Activated CD4-positive, alpha-beta T cell treated with anti-CD3 and anti-CD28 coated beads for 36 hours (primary cell): ENCODE measurements at regions of chr11 and their contacts with region 1.

Region 1: GRCh38 chr11:14606741-14607140 is 36.9 kb upstream of the PDE3B start:
- DNase-seq: no peak
- ATAC-seq: no peak
- H3K4me3 Mint-ChIP-seq: no peak overlapping the region
- H3K27ac Mint-ChIP-seq: no peak overlapping the region
- H3K4me1 Mint-ChIP-seq: peaks cover 6% of the 10 kb centered on the region
- H3K27me3 Mint-ChIP-seq: no peaks in the 10 kb centered on the region

Region 2: DNA sequence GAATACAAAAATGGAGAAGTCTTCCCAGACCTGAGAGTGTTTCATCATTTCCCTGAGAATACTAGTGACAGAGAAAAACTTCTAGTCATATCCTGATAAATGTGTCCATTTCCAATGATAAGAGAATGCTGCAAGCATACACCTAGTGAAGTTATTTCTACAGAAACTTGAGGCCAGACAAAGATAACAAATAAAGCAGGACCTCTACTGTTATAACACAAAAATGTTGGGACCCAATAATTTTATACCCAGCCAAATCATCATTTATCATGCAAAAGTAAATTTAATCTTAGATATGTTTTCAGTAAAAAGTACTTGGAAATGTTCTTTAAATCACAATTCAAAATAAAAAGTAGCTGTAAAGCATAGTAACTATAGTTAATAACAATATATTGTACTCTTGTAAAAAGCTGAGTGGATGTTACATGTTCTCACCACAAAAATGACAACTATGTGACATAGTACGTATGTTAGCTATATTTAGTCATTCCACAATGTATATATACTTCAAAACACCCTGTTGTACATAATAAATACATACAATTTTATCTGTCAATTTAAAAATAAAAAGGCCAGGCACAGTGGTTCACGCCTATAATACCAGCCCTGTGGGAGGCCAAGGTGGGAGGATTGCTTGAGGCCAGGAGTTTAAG is 260.3 kb before region 1 on chr11:
- CTCF ChIA-PET with region 1: no interaction called
- POLR2A ChIA-PET with region 1: interaction called, 10 read pairs
- intact Hi-C with region 1: no loop called
- DNase-seq: no peak
- ATAC-seq: no peak
- H3K4me3 Mint-ChIP-seq: no peak overlapping the region
- H3K27ac Mint-ChIP-seq: no peak overlapping the region
- H3K4me1 Mint-ChIP-seq: peaks cover 31% of the 10 kb centered on the region
- H3K27me3 Mint-ChIP-seq: no peaks in the 10 kb centered on the region